MCF 10A (cell line): ENCODE measurements at regions of chr6 and their contacts with region 1.

Region 1: DNA sequence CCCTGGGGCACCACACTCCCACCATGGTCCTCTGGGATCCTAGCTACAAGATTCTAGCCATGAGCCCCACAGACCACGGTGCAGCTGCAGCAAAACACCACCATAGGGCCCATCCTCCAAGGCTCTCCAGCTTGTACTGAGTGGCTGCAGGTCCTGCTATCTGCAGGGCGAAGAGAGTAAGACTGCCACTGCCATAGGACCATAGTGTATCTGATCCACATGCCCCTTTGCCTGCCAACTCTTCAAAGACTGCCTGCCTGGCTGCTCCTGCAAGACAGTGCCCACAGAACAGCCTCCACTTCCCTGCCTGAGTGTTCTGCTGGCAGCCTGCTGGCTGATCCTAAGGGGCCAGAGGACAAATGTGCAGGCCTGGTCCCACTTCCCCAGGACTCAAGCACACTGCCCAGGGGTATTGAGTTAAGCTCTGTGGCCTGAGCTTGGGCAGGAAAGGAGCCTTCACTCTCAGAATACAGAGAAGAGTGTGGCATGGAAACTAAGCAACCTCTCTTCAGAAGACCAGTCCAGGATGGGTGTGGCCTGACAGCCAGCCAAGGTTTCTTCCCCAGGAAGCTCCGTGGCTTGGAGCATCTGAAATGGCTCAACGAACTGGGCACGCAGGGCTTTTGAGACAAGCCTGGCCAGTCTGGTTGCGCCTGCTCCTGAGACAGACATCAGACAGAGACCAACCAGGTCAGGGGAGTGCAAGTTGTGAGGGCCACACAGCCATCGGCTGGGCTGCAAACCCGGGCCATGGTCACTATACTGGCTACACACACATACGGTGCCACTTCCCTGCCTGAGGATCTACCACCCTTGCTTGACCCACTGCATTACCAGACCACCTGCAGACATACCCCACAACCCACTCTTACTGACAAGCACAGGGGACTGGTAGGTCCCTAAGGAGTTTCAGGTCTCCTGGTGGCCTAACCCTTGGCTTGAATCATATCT is 54.5 kb downstream of the RNGTT start:
- DNase-seq: peak; percentile 26
- H3K4me3 Mint-ChIP-seq: no peak overlapping the region
- H3K27ac Mint-ChIP-seq: no peak overlapping the region
- H3K4me1 Mint-ChIP-seq: peaks cover 6% of the 10 kb centered on the region
- H3K27me3 Mint-ChIP-seq: no peaks in the 10 kb centered on the region
- CTCF ChIP-seq: no peak

Region 2: DNA sequence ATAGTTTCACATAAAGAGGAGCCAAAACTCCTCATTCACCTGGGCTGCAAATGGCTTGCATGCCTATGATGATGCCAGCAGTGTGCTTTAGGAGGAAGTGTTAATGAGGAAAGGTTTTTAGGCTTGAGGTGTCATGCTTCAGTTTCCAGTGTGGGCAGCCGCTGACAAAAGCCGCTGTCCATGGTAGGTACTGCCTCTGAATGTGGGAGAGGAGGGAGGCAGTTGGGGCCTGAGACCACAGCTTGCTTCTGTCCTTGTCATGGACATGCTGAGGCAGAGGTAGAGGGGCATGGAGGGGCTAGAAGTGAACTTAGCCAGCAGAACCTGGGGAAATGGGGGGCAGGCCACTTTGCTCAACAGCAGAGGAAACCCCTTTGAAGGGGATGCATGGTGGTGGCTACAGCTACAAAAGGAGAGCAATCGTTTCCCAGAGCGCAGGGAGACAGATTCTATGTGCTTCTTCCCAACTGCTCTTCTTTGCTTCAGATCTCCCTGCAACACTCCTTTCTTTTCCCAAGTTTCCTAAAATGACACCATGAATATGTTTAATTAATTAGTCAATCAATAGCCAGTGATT is 370.7 kb before region 1 on chr6:
- CTCF ChIA-PET with region 1: no interaction called
- POLR2A ChIA-PET with region 1: no interaction called
- intact Hi-C with region 1: no loop called
- DNase-seq: peak; percentile 40
- H3K4me3 Mint-ChIP-seq: no peak overlapping the region
- H3K27ac Mint-ChIP-seq: no peak overlapping the region
- H3K4me1 Mint-ChIP-seq: no peaks in the 10 kb centered on the region
- H3K27me3 Mint-ChIP-seq: peaks cover 74% of the 10 kb centered on the region
- CTCF ChIP-seq: no peak

Region 3: DNA sequence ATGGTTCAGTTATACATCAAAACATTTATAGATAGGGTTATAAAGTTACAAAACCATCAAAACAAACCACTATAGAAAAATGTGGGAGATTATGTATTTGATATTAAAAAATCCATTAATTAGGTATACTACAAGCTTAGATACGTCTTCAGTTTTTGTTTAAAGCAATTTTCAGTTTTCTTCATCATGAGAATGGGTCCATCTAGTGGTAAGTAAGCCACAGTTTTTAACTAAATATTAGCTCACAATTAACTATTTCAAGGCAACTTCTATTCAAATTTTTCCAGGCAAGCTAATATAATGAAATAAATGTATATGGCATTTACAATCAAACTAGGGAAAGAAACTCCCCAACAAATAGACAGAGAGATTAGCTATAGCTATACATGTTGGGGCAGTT is 10.2 kb after region 1 on chr6:
- CTCF ChIA-PET with region 1: interaction called, 11 read pairs
- POLR2A ChIA-PET with region 1: interaction called, 4 read pairs
- intact Hi-C with region 1: no loop called
- DNase-seq: peak; percentile 4
- H3K4me3 Mint-ChIP-seq: no peak overlapping the region
- H3K27ac Mint-ChIP-seq: no peak overlapping the region
- H3K4me1 Mint-ChIP-seq: no peaks in the 10 kb centered on the region
- H3K27me3 Mint-ChIP-seq: no peaks in the 10 kb centered on the region
- CTCF ChIP-seq: peak; percentile 11